AG04449 (cell line): ENCODE measurements at regions of chr13 and their contacts with region 1.

Region 1: DNA sequence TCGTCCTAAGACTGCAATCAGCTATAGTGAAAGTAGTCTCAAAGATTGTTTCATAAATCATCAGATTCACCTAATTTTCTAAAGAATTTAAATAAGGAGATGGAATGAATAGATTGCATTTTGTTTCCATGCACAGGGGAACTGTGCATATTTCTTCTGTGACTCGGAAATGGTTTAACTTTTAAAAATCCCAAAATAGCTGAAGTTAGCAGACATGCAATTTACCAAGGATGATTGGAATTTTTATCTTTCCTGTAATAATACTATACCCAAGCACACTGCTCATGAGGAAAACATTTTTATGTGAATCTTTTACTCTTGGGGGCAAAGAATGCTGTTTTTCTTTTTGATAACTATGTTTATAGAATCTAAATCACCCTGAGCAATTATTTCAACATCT is 15.0 kb upstream of the LMO7 start:
- DNase-seq: peak; percentile 81
- H3K4me3 ChIP-seq: no peak overlapping the region
- CTCF ChIP-seq: no peak

Region 2: DNA sequence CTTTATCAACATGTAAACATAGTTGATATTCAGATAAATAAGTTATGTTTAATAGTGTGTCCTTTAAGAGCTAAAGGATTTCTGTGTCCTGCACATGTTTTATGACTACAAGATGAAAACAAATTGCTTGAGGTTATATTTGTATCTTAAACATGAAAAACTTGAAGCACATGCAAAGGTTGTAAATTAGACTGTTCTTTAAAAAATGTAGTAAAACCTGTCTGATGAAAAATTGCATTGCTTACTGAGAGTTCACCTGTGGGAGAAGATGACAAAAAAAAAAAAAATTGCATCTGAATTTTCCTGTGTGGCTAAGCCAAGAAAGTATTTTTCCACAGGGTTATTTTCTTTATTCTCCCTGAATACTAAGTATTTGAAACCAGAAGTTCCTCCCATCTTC is 10.7 kb before region 1 on chr13:
- CTCF ChIA-PET with region 1: no interaction called
- POLR2A ChIA-PET with region 1: no interaction called
- DNase-seq: no peak
- H3K4me3 ChIP-seq: no peak overlapping the region
- CTCF ChIP-seq: no peak

Region 3: DNA sequence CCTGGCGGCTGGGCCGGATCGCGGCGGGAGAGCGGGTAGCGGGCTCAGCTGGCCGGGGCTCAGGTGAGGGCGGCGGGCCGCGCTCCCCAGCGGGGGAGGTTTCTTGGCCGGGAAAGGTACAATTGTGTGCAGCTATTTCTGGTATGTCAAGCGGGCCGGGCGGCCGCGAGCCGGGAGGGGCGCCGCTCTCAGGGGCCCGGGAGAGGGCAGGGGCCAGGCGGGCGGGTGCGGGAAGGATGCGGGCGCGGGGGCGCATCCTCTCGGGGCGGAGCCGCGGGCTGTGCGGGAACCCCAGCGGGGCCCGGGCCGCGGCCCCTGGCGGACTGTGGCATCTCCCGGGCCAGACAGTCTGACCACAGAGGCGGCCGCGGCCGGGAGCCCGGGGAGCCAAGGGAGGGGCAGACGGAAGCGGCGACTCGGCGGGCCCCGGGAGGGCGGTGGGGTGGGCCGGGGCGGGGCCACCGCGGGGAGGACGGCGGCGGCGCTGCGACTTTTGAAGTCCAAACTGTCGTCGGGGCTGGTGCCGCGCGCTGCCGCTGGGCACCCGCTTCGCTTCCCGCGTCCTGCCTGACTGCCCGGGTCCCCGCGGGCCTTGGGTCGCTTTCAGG is 14.8 kb after region 1 on chr13 and contains the start of gene LMO7:
- CTCF ChIA-PET with region 1: interaction called, 6 read pairs
- POLR2A ChIA-PET with region 1: interaction called, 28 read pairs
- DNase-seq: no peak
- H3K4me3 ChIP-seq: peak within 1 kb of the TSS; percentile 97
- CTCF ChIP-seq: no peak

Region 4: GRCh38 chr13:75651013-75651412 is 29.9 kb after region 1 on chr13:
- CTCF ChIA-PET with region 1: no interaction called
- POLR2A ChIA-PET with region 1: no interaction called
- DNase-seq: no peak
- H3K4me3 ChIP-seq: no peak overlapping the region
- CTCF ChIP-seq: no peak